Aorta (tissue), 5 donors: ENCODE measurements at regions of chr12 and their contacts with region 1.

Region 1: GRCh38 chr12:49707128-49707811 is at the start of gene FMNL3:
- DNase-seq: peak; percentile 99 to 100
- ATAC-seq: peak; percentile 99
- H3K4me3 ChIP-seq: peak within 1 kb of the TSS; percentile 56 to 57
- H3K27ac ChIP-seq: peak within 1 kb of the TSS in 1 of 2 donors; percentile 9
- H3K4me1 ChIP-seq: peaks cover 0 to 6% of the 10 kb centered on the region in 2 donors
- H3K27me3 ChIP-seq: no peaks in the 10 kb centered on the region
- total RNA-seq, gene FMNL3: 31.4 to 53.9 TPM

Region 2: GRCh38 chr12:49644620-49644994 is 62.7 kb before region 1 on chr12:
- intact Hi-C with region 1: loop called (anchors 1 kb)
- DNase-seq: peak; percentile 88 to 90
- ATAC-seq: peak; percentile 84
- H3K4me3 ChIP-seq: no peak overlapping the region
- H3K27ac ChIP-seq: no peak overlapping the region
- H3K4me1 ChIP-seq: no peaks in the 10 kb centered on the region
- H3K27me3 ChIP-seq: no peaks in the 10 kb centered on the region

Region 3: DNA sequence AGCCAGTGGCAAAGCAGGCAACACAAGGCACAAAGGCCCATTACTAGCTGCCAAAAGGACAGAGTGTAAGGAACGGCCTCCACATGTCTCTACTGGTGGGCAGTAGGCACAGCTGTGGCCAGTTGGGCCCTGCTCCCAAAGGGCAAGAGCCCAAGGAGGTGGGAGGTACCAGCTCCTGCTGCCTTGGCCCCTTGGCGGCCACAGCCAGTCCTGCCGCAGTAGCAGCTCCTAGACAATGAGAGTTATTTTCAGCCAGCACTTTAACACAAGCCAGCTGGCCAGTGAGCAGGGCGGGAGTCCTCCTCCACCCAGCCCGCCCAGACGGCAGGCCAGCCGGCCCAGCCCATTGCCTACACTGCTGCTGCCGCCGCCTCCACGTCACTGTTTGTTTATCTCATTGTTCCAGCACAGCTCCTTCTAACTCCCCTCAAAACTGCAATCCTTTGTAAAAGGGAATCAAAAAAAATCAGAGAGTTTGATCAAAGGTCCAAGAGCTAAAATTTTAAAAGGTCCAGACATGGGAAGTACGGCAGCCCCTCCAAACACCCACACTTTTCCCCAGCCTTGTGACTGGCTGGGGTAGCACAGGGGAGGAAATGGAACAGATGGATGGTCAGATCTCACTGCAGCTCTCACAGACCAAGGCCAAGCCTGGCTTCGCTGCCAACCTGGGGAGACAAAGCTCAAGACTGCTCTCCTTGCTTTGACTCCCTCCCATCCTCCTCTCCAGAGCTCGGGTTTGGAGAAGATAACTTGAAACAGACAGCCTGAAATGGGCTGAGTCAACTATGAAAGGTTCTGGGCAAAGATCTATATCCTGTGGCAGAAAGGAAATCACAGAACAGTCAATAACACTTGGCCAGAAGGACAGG is 33.6 kb before region 1 on chr12:
- intact Hi-C with region 1: loop called in 1 of 2 experiments (anchors 5 kb)
- DNase-seq: peak; percentile 95
- ATAC-seq: peak; percentile 98
- H3K4me3 ChIP-seq: no peak overlapping the region
- H3K27ac ChIP-seq: peak overlapping the region; percentile 89 to 90
- H3K4me1 ChIP-seq: peaks cover 0 to 4% of the 10 kb centered on the region in 2 donors
- H3K27me3 ChIP-seq: no peaks in the 10 kb centered on the region